Body of pancreas (tissue), 4 donors: ENCODE measurements at regions of chr17 and their contacts with region 1.

Region 1: DNA sequence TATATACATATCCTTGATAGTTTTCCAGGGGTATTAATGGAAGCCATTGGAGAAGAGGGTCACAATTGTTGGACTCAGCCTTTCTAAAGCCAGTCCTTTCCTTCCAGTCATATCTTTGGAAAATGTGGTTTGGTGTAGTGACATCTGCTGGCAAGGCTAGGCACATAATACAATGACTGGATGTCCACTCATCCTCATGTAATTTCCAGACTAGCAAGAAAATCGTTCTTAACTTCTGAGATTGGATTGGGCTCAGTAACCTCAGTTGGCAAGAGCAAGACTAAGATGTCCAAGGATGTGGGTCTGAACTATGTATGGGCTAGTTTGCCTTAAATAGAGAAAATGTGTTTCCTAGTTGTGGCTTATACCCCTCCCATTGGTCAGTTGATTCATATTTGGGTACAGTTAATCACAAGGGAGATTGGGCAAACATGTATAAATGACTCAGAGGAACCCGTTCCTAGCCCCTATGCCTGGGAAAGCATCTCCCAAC is 8.7 kb upstream of the KAT7 start:
- DNase-seq: peak; percentile 32 to 67 (median 51)
- ATAC-seq: peak; percentile 79
- H3K4me3 ChIP-seq: no peak overlapping the region
- H3K27ac ChIP-seq: no peak overlapping the region
- H3K4me1 ChIP-seq: no peaks in the 10 kb centered on the region
- H3K27me3 ChIP-seq: no peaks in the 10 kb centered on the region
- CTCF ChIP-seq: peak; percentile 31 to 76 (median 62)
- POLR2A ChIP-seq: no peak

Region 2: DNA sequence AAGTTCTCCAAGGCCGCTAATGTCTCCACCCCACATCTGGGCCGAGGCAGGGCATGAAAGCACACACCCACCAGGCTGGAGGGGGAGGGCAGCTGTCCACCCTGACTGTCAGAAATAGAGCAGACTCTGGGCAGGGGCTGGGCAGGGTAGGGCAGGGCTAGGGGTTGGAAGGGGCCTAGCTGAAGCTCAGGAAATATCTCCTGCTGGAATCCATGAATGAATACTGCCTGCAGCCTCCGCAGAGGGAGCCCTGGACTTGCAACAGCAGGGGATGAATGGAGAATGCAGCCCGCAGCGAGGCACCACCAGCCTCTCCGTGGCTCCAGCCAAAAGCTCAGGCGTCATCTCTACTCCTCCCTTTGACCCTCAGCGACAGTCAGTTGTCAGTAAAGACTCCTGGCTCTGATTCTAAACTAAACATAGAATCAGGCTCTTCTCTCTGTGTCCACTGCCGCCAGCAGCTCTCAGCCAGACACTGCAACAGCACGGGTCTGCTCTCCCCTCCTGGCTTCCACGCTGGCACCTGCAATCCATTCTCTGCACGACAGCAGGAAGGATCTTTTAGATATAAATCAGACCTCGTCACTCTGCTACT is 308.6 kb before region 1 on chr17:
- intact Hi-C with region 1: no loop called
- DNase-seq: no peak
- ATAC-seq: no peak
- H3K4me3 ChIP-seq: no peak overlapping the region
- H3K27ac ChIP-seq: no peak overlapping the region
- H3K4me1 ChIP-seq: peaks cover 9% of the 10 kb centered on the region
- H3K27me3 ChIP-seq: peaks cover 0 to 7% of the 10 kb centered on the region in 2 donors
- CTCF ChIP-seq: no peak
- POLR2A ChIP-seq: no peak

Region 3: DNA sequence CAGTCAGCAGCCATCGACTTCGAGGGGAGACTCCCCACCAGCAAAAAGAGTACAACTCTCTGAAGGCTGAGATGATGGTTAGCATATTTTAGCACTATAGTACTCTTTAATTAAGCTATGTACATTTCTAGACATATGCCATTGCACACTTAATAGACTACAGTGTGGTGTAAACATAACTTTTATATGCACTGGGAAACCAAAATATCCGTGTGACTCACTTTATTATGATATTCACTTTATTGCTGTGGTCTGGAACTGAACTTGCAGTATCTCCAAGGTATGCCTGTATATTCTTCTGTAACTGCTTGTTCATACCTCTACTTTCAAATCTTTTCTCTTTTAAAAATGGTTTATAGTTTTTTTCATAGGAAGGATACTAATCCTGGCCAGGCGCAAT is 215.1 kb before region 1 on chr17:
- intact Hi-C with region 1: loop called (anchors 5 kb)
- DNase-seq: no peak
- ATAC-seq: no peak
- H3K4me3 ChIP-seq: no peak overlapping the region
- H3K27ac ChIP-seq: no peak overlapping the region
- H3K4me1 ChIP-seq: peaks cover 27% of the 10 kb centered on the region
- H3K27me3 ChIP-seq: no peaks in the 10 kb centered on the region
- CTCF ChIP-seq: no peak
- POLR2A ChIP-seq: no peak

Region 4: DNA sequence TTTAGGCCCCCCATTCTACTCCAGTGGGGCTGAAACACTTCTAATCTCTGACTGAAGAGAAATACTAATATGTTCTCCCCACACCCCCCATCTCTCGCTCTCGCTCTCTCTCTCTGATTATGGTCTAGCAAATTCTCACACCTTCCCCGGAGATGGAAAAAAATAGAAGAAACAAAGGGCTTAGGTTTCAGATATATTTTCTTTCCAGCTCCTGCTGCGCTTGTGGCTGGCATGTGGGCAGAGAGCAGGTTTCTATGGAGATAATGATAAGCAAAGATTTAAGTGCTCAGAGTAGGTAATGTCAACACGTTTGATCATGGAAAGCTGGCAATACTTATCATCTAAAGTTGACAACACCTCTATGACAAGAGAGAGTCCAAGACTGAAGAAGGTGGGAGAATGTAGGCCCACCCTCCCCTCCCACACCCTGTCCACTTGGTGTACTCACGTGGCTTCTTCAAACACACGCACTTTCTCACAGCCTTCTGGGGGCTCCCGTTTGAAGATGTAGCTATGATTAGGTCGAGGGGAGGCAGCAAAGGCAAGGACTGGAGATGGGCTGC is 64.0 kb before region 1 on chr17:
- intact Hi-C with region 1: loop called (anchors 5 kb)
- DNase-seq: peak in 2 of 4 donors; percentile 34 to 47
- ATAC-seq: peak; percentile 75
- H3K4me3 ChIP-seq: no peak overlapping the region
- H3K27ac ChIP-seq: peak overlapping the region in 3 of 4 donors; percentile 22 to 65 (median 51)
- H3K4me1 ChIP-seq: peaks cover 33% of the 10 kb centered on the region
- H3K27me3 ChIP-seq: no peaks in the 10 kb centered on the region
- CTCF ChIP-seq: no peak
- POLR2A ChIP-seq: no peak